ENCODE measurements at regions of chr10 and their contacts with region 1.

Region 1: DNA sequence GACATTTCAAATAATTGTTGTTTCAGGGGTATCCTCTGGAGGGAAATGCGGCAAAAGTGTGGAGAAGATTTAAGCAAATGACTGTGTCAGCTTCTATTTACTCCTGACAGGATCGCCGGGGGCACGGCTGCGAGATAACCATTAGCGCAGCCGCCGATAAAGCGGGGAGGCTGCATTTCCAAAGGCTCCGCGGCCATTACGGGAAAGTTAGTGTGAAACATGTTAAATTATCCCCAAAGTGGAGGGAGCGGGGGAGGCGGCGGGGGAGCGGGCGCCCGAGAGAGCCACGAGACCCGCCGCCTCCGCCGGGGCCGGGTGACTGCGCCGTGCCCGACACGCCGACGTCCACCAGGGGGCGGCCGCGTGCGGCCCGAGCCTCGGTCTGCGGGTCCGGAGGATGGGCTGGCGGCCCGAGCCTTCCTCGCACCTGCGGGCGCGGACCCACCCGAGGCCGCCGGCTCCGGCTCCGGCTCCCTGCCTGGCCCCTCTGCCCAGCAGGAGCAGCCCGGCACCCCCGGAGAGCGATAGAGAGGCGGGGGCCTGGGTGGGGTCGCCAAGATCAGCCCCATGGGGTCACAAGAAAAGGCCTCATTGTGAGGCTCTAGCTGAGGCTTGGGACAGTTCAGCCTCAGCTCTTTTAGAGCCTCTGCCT is 74.4 kb upstream of the PAX2 start:
- DNase-seq: peak; percentile 77
- ATAC-seq: peak; percentile 67
- H3K4me3 Mint-ChIP-seq: peak overlapping the region; percentile 61
- H3K27ac Mint-ChIP-seq: no peak overlapping the region
- H3K4me1 Mint-ChIP-seq: peaks cover 28% of the 10 kb centered on the region
- H3K27me3 Mint-ChIP-seq: peaks cover 60% of the 10 kb centered on the region
- CTCF ChIP-seq: peak; percentile 92

Region 2: DNA sequence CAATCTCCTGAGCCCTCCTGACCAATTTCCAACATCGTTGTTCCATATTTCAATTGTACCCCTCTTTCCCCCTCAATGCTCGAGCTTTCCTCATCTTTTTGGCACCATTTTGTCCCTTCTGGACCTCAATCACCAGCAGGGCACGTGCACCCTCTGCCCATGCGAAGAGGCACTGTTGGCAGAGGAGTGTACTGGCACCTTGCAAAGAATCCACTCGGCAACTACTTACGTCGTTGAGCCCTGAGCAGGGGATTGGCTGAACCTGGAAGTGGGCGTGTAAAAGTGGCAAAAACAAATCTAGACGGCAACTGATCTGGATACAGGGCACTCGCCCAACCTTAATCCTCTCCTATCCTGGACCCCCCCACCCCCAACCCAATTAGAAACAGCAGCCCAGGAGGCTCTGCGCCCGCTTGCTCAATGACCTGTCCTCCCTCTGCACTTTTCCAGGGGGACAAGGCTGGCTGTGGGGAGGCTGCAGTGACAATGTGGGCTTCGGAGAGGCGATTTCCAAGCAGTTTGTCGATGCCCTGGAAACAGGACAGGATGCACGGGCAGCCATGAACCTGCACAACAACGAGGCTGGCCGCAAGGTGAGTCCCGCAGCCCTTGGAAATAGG is 189.4 kb before region 1 on chr10:
- CTCF ChIA-PET with region 1: no interaction called
- POLR2A ChIA-PET with region 1: no interaction called
- DNase-seq: peak; percentile 89
- ATAC-seq: peak; percentile 76
- H3K4me3 Mint-ChIP-seq: peak overlapping the region; percentile 75
- H3K27ac Mint-ChIP-seq: no peak overlapping the region
- H3K4me1 Mint-ChIP-seq: peaks cover 40% of the 10 kb centered on the region
- H3K27me3 Mint-ChIP-seq: peaks cover 94% of the 10 kb centered on the region
- CTCF ChIP-seq: no peak

Region 3: GRCh38 chr10:100650693-100651092 is 20.3 kb before region 1 on chr10:
- CTCF ChIA-PET with region 1: no interaction called
- POLR2A ChIA-PET with region 1: no interaction called
- DNase-seq: no peak
- ATAC-seq: no peak
- H3K4me3 Mint-ChIP-seq: no peak overlapping the region
- H3K27ac Mint-ChIP-seq: no peak overlapping the region
- H3K4me1 Mint-ChIP-seq: peaks cover 28% of the 10 kb centered on the region
- H3K27me3 Mint-ChIP-seq: peaks cover 49% of the 10 kb centered on the region
- CTCF ChIP-seq: no peak

Region 4: GRCh38 chr10:100683545-100684300 is 12.8 kb after region 1 on chr10:
- CTCF ChIA-PET with region 1: interaction called, 21 read pairs
- POLR2A ChIA-PET with region 1: no interaction called
- DNase-seq: peak; percentile 44
- ATAC-seq: peak; percentile 39
- H3K4me3 Mint-ChIP-seq: peak overlapping the region; percentile 60
- H3K27ac Mint-ChIP-seq: no peak overlapping the region
- H3K4me1 Mint-ChIP-seq: peaks cover 39% of the 10 kb centered on the region
- H3K27me3 Mint-ChIP-seq: peaks cover 87% of the 10 kb centered on the region
- CTCF ChIP-seq: no peak

Region 5: GRCh38 chr10:100890673-100891317 is 219.8 kb after region 1 on chr10:
- CTCF ChIA-PET with region 1: no interaction called
- POLR2A ChIA-PET with region 1: no interaction called
- DNase-seq: no peak
- ATAC-seq: peak; percentile 61
- H3K4me3 Mint-ChIP-seq: no peak overlapping the region
- H3K27ac Mint-ChIP-seq: no peak overlapping the region
- H3K4me1 Mint-ChIP-seq: peaks cover 14% of the 10 kb centered on the region
- H3K27me3 Mint-ChIP-seq: peaks cover 6% of the 10 kb centered on the region; the same call in 1 of the 2 replicates
- CTCF ChIP-seq: no peak